ENCODE measurements at regions of chr12 and their contacts with region 1.

Region 1: DNA sequence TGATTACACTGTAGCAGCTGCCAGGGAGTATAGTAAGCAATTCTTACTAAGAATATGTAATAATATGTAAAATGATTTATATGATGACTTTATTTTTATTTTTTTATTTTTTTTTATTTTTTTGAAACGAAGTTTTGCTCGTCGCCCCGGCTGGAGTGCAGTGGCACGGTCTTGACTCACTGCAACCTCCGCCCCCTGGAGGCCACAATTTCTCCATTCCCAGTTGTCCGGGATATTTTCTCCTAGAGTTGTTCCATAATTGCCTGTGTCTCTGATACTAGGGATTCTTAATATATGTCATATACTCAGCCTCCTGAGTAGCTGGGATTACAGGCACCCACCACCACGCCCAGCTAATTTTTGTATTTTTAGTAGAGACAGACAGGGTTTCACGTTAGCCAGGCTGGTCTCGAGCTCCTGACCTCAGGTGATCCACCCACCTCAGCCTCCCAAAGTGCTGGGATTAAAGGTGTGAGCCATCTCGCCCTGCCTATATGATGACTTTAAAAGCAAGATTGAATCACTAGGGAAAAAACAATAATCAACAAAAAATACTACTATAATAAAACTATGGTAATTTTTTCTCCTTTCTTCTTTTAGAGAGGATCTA is 12.2 kb upstream of the ITPR2 start:
- DNase-seq: peak; percentile 44 to 58 (median 51)
- H3K4me3 ChIP-seq: peak overlapping the region in 1 of 7 experiments; percentile 39
- H3K27ac ChIP-seq: no peak overlapping the region
- H3K4me1 ChIP-seq: peaks cover 9 to 24% (median 16%) of the 10 kb centered on the region in 4 experiments
- H3K27me3 ChIP-seq: no peaks in the 10 kb centered on the region

Region 2: DNA sequence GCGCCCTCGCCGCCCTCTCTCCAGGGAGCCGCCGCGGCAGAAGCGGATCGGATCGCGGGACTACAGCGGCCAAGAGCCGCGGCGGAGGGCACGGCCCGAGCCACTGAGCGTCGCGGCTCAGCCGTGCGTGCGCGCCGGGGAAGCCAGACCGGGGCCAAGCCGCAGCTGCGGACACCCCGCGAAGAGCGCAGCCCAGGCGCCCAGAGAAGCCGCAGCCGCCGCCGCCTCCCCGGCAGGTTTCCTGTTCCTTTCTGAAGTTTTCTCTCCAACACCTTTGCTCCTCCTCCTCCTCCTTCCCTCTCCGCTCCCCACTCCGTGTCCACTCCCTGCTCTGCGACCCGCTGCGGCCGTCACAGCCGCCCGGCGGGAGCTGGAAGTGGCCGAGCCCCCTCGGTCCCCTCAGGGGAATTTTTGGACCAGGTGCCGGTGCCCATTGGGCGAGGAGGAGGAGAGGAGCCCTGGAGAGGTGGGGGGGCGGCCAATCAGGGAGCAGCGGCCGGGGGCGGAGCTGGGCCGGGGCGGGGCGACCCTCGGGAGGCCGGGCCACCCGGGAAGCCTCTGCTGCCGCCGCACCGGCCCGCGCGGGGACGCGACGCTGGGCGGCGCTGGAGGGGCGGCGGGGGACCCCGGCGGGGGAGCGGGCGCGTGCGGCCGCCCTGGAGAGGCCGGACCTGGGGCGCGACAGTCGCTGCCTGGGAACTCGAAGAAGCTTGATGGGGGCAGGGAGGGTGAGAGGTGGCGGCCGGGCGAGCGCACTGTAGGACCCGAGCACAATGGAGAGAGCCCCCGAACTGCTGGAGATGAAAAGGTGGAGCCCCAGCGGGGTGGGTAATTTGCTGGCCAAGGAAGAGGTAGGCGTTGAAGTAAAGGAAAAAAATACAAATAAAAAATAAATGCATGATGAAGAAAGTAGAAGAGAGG is 12.1 kb before region 1 on chr12 and contains the start of gene ITPR2:
- CTCF ChIA-PET with region 1: interaction called, 27 read pairs
- POLR2A ChIA-PET with region 1: interaction called, 22 read pairs
- DNase-seq: peak; percentile 90 to 94 (median 91)
- H3K4me3 ChIP-seq: peak within 1 kb of the TSS; percentile 88 to 98 (median 92)
- H3K27ac ChIP-seq: peak within 1 kb of the TSS; percentile 87 to 93
- H3K4me1 ChIP-seq: peaks cover 14 to 43% (median 24%) of the 10 kb centered on the region in 4 experiments
- H3K27me3 ChIP-seq: no peaks in the 10 kb centered on the region

Region 3: DNA sequence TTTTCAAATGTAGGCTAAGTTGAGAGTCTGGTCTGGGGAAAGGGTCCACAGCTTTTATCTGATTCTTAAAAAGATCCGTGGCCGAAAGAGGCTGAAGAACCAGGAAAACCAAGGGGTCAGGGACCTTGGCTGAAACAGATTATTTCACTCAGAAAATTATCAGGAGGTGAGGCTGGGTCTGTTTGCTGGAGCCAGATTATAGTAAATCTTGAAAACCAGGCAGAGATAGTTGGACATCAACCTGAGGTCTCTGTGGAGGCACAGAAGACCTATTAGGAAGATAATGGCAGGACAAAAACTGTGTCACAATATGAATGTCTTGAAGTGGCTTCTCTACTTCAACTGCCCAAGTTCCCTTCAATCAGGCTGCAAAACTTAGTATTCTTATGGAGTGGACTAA is 175.6 kb after region 1 on chr12:
- CTCF ChIA-PET with region 1: no interaction called
- POLR2A ChIA-PET with region 1: no interaction called
- DNase-seq: no peak
- H3K4me3 ChIP-seq: no peak overlapping the region
- H3K27ac ChIP-seq: no peak overlapping the region
- H3K4me1 ChIP-seq: peaks cover 24 to 69% (median 47%) of the 10 kb centered on the region in 4 experiments
- H3K27me3 ChIP-seq: no peaks in the 10 kb centered on the region